Activated CD4-positive, alpha-beta memory T cell treated with anti-CD3 and anti-CD28 coated beads for 36 hours (primary cell): ENCODE measurements at regions of chr7 and their contacts with region 1.

Region 1: GRCh38 chr7:102412548-102412947 is 16.4 kb downstream of the PRKRIP1 start:
- DNase-seq: peak; percentile 53
- H3K4me3 Mint-ChIP-seq: no peak overlapping the region
- H3K27ac Mint-ChIP-seq: no peak overlapping the region
- H3K4me1 Mint-ChIP-seq: peaks cover 31% of the 10 kb centered on the region
- H3K27me3 Mint-ChIP-seq: no peaks in the 10 kb centered on the region

Region 2: DNA sequence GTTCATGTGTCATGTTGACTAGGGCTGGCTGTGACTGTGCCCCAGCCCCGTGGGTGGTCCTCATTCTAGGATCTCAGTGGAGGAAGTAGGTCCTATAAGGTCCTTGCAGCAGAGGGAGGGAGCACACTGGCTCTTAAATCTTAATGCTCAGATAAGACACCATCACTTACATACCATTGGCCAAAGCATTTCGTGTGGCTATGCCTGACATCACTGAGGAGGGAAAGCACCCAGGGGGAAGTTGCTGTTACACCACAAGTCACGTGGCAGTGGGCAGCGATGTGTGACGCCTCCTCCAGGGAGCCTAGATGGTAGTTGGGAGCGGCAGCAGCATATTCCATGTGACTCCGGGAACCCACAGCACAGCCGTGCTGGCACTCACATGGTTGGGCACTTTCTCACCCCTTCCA is 350.6 kb before region 1 on chr7:
- CTCF ChIA-PET with region 1: no interaction called
- POLR2A ChIA-PET with region 1: no interaction called
- intact Hi-C with region 1: no loop called
- DNase-seq: peak; percentile 22
- H3K4me3 Mint-ChIP-seq: no peak overlapping the region
- H3K27ac Mint-ChIP-seq: no peak overlapping the region
- H3K4me1 Mint-ChIP-seq: peaks cover 2% of the 10 kb centered on the region
- H3K27me3 Mint-ChIP-seq: no peaks in the 10 kb centered on the region

Region 3: DNA sequence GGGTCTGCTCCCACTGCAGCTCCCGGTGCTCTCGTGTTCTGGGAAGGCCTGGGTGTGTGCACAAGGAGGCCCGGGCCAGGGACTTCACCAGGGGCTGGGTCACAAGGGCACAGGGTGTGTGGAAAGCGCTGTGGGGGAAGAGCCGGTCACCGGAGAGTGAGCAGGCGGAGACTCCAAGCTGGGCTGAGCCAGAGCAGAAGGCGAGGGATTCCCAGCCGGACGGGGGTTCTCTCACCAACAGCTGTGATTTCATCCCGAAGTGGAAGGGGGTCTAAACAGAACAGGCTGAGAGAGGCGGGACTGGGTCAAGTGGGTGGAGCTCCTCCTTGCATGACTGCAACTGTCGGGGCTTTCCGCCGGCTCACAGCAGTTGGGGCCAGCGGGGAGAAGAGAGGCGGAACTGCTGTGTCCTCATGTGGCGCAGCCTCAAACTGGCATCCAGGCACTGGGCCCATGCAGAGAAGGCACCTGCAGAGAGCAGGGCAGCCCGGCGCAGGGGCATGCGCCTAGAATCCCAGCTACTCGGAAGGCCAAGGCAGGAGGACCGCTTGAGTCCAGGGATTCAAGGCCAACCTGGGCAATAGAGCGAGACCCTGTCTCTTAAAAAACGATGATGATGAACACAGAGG is 13.2 kb after region 1 on chr7:
- CTCF ChIA-PET with region 1: interaction called, 12 read pairs
- POLR2A ChIA-PET with region 1: interaction called, 34 read pairs
- intact Hi-C with region 1: loop called (anchors 1 kb)
- DNase-seq: peak; percentile 92
- H3K4me3 Mint-ChIP-seq: peak overlapping the region; percentile 76
- H3K27ac Mint-ChIP-seq: peak overlapping the region; percentile 100
- H3K4me1 Mint-ChIP-seq: peaks cover 62% of the 10 kb centered on the region
- H3K27me3 Mint-ChIP-seq: no peaks in the 10 kb centered on the region

Region 4: GRCh38 chr7:102433219-102434038 is 20.9 kb after region 1 on chr7 and contains the start of gene ORAI2:
- CTCF ChIA-PET with region 1: interaction called, 11 read pairs
- POLR2A ChIA-PET with region 1: interaction called, 12 read pairs
- intact Hi-C with region 1: loop called (anchors 1 kb)
- DNase-seq: peak; percentile 89
- H3K4me3 Mint-ChIP-seq: peak within 1 kb of the TSS; percentile 81
- H3K27ac Mint-ChIP-seq: peak within 1 kb of the TSS; percentile 93
- H3K4me1 Mint-ChIP-seq: peaks cover 48% of the 10 kb centered on the region
- H3K27me3 Mint-ChIP-seq: no peaks in the 10 kb centered on the region
- total RNA-seq, gene ORAI2: 28.7 to 31.5 TPM

Region 5: DNA sequence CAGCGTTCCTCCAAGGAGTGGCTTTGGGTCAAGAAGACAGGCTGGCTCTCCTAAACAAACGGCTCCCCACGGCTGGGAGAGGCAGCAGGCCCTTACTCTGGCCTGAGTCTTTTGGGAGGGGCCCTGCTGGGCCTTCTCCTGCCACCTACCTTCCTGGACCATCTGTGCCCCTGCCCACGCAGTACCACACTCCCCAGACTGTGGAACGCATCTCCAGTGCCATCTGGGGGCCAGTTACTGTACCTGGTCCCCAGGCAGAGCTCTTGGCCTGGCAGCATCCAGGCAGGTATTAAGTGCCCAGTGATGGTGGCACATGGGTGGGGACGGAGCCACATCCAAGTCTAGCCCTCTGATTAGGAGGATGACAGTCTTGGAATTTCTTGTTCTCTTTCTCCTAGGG is 37.7 kb after region 1 on chr7:
- CTCF ChIA-PET with region 1: interaction called, 18 read pairs
- POLR2A ChIA-PET with region 1: interaction called, 3 read pairs
- intact Hi-C with region 1: loop called (anchors 1 kb)
- DNase-seq: peak; percentile 73
- H3K4me3 Mint-ChIP-seq: no peak overlapping the region
- H3K27ac Mint-ChIP-seq: no peak overlapping the region
- H3K4me1 Mint-ChIP-seq: peaks cover 4% of the 10 kb centered on the region
- H3K27me3 Mint-ChIP-seq: no peaks in the 10 kb centered on the region

Region 6: DNA sequence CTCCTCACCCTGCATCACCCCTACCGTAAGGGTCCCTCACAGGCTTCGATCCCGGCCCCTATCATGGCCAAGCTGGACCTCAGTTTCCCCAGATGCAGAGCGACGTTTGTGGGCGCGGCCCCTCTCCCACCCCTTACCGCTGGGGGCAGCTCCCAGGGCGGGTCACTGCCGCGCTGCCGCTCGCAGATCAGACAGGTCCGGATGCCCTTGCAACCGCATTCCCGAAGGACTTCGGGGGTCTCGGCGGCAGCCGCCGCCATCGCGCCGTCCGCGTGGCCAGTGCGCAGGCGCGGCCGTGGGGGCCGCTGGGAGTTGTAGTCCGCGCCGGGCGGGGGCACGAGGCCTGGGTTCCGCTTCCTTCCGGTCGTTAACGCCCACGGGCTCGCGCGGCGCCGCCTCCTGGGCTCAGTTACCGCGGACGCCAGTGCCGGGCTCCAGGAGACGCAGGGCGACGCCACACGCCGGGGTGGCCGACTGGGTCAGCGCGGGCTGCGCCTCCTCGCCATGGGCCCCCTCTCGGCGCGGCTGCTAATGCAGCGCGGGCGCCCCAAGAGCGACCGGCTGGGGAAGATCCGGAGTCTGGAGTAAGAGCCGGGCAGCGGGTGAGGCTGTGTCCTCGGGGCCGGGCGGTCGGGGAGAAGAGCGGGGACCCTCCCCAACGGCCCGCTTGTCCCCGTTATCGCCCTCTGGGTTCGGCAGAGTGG is 52.2 kb after region 1 on chr7 and contains the starts of genes ALKBH4 and LRWD1:
- CTCF ChIA-PET with region 1: interaction called, 20 read pairs
- POLR2A ChIA-PET with region 1: no interaction called
- intact Hi-C with region 1: no loop called
- DNase-seq: peak; percentile 97
- H3K4me3 Mint-ChIP-seq: peak within 1 kb of the TSS; percentile 93
- H3K27ac Mint-ChIP-seq: peak within 1 kb of the TSS; percentile 75
- H3K4me1 Mint-ChIP-seq: peaks cover 28% of the 10 kb centered on the region
- H3K27me3 Mint-ChIP-seq: no peaks in the 10 kb centered on the region
- total RNA-seq, gene ALKBH4: 7.7 to 7.8 TPM
- total RNA-seq, gene LRWD1: 16.4 to 20.0 TPM

Region 7: DNA sequence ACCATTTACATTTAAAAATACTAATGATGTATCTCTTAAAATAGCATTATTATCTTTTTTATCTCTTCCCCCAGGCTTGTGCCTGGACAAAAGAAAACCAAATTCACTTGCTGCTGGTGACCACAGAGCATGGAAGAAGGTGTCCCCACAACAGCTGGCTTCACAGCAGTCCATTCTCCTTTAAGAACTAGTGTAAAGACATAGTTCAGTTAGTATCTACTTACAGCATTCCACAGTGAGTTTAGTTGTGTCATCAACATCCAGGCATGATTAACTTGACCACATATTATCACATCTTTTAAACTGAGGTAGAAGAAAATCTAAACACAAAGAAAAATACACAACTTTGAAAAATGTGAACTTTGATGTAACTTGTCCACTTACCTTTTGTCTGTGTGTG is 555.2 kb after region 1 on chr7:
- CTCF ChIA-PET with region 1: no interaction called
- POLR2A ChIA-PET with region 1: no interaction called
- intact Hi-C with region 1: no loop called
- DNase-seq: no peak
- H3K4me3 Mint-ChIP-seq: no peak overlapping the region
- H3K27ac Mint-ChIP-seq: no peak overlapping the region
- H3K4me1 Mint-ChIP-seq: no peaks in the 10 kb centered on the region
- H3K27me3 Mint-ChIP-seq: no peaks in the 10 kb centered on the region